ENCODE measurements at regions of chr22 and their contacts with region 1.

Region 1: GRCh38 chr22:25696763-25697667 is 45.0 kb upstream of the MYO18B start:
- ATAC-seq: peak in 1 of 8 experiments; percentile 48
- H3K4me3 ChIP-seq: no peak overlapping the region
- H3K27ac ChIP-seq: no peak overlapping the region
- H3K4me1 ChIP-seq: peaks cover 2 to 5% of the 10 kb centered on the region in 2 donors

Region 2: DNA sequence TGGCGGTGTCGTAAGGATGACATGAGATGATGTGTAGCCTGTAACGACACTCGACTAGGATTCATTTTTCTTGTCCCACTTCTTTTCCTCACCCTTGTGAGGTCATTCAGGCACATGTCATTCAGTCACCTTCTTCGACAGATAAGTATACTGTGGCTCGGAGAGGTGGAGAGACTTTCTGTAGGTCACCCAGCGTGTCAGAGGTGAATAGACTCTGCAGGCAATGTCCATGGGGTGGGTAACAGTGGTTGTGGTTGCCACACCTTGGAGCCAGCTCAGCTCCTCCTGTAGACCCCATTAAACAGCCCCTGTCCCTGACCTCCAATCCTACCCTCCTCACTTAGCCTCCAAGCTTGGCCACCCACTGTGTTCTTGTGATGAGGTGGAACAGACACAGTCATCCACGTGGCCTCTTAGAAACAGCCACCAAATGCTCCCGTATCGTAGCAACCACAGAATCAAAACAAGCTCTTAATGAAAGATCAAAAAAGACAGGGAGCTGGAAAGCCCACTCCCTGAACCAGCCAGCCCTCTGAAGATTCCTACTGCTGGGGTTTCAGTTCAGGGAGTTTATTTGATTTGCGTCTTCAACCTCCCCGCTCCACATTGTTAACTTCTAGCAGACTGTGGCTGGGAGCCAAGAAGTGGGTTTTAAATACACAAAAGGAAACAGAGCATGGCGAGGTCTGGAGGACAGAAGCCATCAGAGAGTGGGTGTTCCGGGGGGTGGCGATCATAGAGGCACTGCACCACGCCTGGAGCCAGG is 221.6 kb before region 1 on chr22:
- in situ Hi-C with region 1: loop called in 5 of 9 experiments (anchors 5 to 25 kb)
- ATAC-seq: peak in 7 of 8 experiments; percentile 70 to 94 (median 90)
- H3K4me3 ChIP-seq: no peak overlapping the region
- H3K27ac ChIP-seq: peak overlapping the region in 1 of 2 donors; percentile 22
- H3K4me1 ChIP-seq: peaks cover 0 to 10% of the 10 kb centered on the region in 2 donors

Region 3: DNA sequence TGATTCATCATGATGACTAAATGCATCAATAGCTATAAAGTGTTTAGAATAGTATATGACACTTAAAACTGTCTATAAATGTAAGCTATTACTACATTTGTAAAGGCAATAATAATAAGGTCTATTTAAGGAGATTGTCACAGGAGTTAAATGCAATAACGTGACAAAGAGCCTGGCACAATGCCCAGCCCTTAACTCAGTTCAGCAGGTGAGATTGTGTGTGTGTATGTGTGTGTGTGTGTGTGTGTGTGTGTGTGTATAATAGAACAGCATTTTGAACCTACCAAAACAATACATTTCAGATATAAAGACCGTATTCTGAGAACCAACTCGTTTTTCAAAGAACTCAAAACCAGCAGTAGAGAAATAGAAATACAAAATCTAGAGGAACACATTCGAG is 222.4 kb after region 1 on chr22:
- in situ Hi-C with region 1: no loop called
- ATAC-seq: no peak
- H3K4me3 ChIP-seq: no peak overlapping the region
- H3K27ac ChIP-seq: no peak overlapping the region
- H3K4me1 ChIP-seq: peaks cover 10 to 12% of the 10 kb centered on the region in 2 donors